Right ventricle myocardium inferior (tissue), 1 donor: ENCODE measurements at regions of chr17 and their contacts with region 1.

Region 1: GRCh38 chr17:6413065-6413464 is 21.9 kb downstream of the AIPL1 start:
- DNase-seq: no peak
- ATAC-seq: no peak

Region 2: GRCh38 chr17:6069539-6070429 is 343.3 kb before region 1 on chr17 and contains the start of gene WSCD1:
- intact Hi-C with region 1: loop called (anchors 10 kb)
- DNase-seq: no peak
- ATAC-seq: peak; percentile 62
- total RNA-seq, gene WSCD1: 10.6 TPM